ENCODE measurements at regions of chr17 and their contacts with region 1.

Region 1: GRCh38 chr17:56489980-56490379 is 103.5 kb upstream of the NOG start:
- DNase-seq: no peak
- ATAC-seq: no peak
- H3K4me3 ChIP-seq: no peak overlapping the region
- H3K27ac ChIP-seq: no peak overlapping the region
- H3K4me1 ChIP-seq: no peaks in the 10 kb centered on the region
- CTCF ChIP-seq: no peak
- EP300 ChIP-seq: no peak
- POLR2A ChIP-seq: no peak
- RAD21 ChIP-seq: no peak

Region 2: GRCh38 chr17:56478836-56479447 is 11.0 kb before region 1 on chr17:
- CTCF ChIA-PET with region 1: interaction called, 14 read pairs
- POLR2A ChIA-PET with region 1: no interaction called
- DNase-seq: peak; percentile 25 to 53
- ATAC-seq: peak; percentile 66 to 86; a peak in 3 of 6 replicates
- H3K4me3 ChIP-seq: no peak overlapping the region
- H3K27ac ChIP-seq: no peak overlapping the region
- H3K4me1 ChIP-seq: no peaks in the 10 kb centered on the region
- CTCF ChIP-seq: peak; percentile 59
- EP300 ChIP-seq: no peak
- POLR2A ChIP-seq: no peak
- RAD21 ChIP-seq: peak; percentile 38 to 42; a peak in 4 of 5 replicates

Measured in A549 (cell line).